Heart left ventricle (tissue), 16 donors: ENCODE measurements at regions of chr11 and their contacts with region 1.

Region 1: GRCh38 chr11:11635443-11635842 is 13.6 kb upstream of the GALNT18 start:
- DNase-seq: no peak
- ATAC-seq: no peak
- H3K4me3 ChIP-seq: no peak overlapping the region
- H3K27ac ChIP-seq: no peak overlapping the region
- H3K4me1 ChIP-seq: no peaks in the 10 kb centered on the region
- H3K27me3 ChIP-seq: no peaks in the 10 kb centered on the region
- CTCF ChIP-seq: no peak
- POLR2A ChIP-seq: no peak

Region 2: GRCh38 chr11:11569936-11570491 is 65.4 kb before region 1 on chr11:
- intact Hi-C with region 1: no loop called
- DNase-seq: peak; percentile 79 to 84 (median 80)
- ATAC-seq: peak; percentile 74 to 93 (median 90)
- H3K4me3 ChIP-seq: peak overlapping the region in 6 of 12 donors; percentile 8 to 35 (median 26)
- H3K27ac ChIP-seq: peak overlapping the region; percentile 6 to 88 (median 74)
- H3K4me1 ChIP-seq: peaks cover 0 to 84% (median 33%) of the 10 kb centered on the region in 12 donors
- H3K27me3 ChIP-seq: no peaks in the 10 kb centered on the region
- CTCF ChIP-seq: peak in 8 of 12 donors; percentile 17 to 47 (median 28)
- POLR2A ChIP-seq: no peak

Region 3: GRCh38 chr11:11735586-11735985 is 100.1 kb after region 1 on chr11:
- intact Hi-C with region 1: loop called in 1 of 10 experiments (anchors 5 kb)
- DNase-seq: no peak
- ATAC-seq: no peak
- H3K4me3 ChIP-seq: no peak overlapping the region
- H3K27ac ChIP-seq: no peak overlapping the region
- H3K4me1 ChIP-seq: no peaks in the 10 kb centered on the region
- H3K27me3 ChIP-seq: no peaks in the 10 kb centered on the region
- CTCF ChIP-seq: no peak
- POLR2A ChIP-seq: no peak